ENCODE measurements at regions of chr12 and their contacts with region 1.

Region 1: DNA sequence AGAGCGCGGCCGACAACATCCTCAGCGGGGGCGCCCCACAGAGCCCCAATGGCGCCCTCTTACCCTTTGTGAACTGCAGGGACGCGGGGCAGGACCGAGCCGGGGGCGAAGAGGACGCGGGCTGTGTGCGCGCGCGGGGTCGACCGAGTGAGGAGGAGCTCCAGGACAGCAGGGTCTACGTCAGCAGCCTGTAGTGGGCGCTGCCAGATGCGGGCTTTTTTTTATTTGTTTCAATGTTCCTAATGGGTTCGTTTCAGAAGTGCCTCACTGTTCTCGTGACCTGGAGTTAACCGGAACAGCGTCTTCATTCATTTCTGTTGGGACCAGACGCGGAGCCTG is 103.8 kb upstream of the FKBP4 start:
- DNase-seq: peak in 8 of 9 donors; percentile 36 to 66 (median 56)
- ATAC-seq: peak; percentile 75
- H3K4me3 ChIP-seq: peak overlapping the region; percentile 92
- H3K4me3 Mint-ChIP-seq: peak overlapping the region; percentile 88 to 100 (median 93)
- H3K27ac ChIP-seq: peak overlapping the region; percentile 79
- H3K27ac Mint-ChIP-seq: peak overlapping the region; percentile 60 to 93 (median 86)
- H3K4me1 ChIP-seq: peaks cover 15 to 22% of the 10 kb centered on the region in 2 donors
- H3K4me1 Mint-ChIP-seq: peaks cover 36 to 57% (median 49%) of the 10 kb centered on the region in 7 donors
- H3K27me3 ChIP-seq: no peaks in the 10 kb centered on the region
- H3K27me3 Mint-ChIP-seq: peaks cover 0 to 12% (median 1%) of the 10 kb centered on the region in 5 donors

Region 2: DNA sequence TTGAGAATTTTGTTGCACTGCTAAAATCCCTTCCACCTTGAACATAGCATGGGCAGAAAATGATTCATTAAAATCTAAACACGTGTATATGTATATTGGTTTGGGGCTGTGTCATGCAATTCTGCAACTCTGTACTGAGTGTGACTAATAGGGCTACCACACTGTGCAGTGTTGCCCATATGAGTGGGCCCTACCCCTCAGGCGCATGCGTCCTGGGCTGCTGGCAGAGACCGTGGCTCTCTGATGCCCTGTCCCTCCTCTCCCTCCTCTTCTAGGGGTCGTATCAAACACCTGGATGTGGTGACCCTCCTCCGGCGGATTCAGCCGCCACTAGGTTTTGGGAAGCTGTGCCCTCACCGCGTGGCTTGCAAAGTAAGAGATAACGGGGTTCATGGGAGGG is 24.6 kb before region 1 on chr12:
- CTCF ChIA-PET with region 1: no interaction called
- POLR2A ChIA-PET with region 1: no interaction called
- intact Hi-C with region 1: no loop called
- DNase-seq: peak in 1 of 9 donors; percentile 3
- ATAC-seq: no peak
- H3K4me3 ChIP-seq: no peak overlapping the region
- H3K4me3 Mint-ChIP-seq: no peak overlapping the region
- H3K27ac ChIP-seq: no peak overlapping the region
- H3K27ac Mint-ChIP-seq: no peak overlapping the region
- H3K4me1 ChIP-seq: no peaks in the 10 kb centered on the region
- H3K4me1 Mint-ChIP-seq: peaks cover 0 to 3% (median 0%) of the 10 kb centered on the region in 7 donors
- H3K27me3 ChIP-seq: no peaks in the 10 kb centered on the region
- H3K27me3 Mint-ChIP-seq: peaks cover 0 to 2% (median 0%) of the 10 kb centered on the region in 5 donors

Region 3: GRCh38 chr12:2752676-2753371 is 61.8 kb after region 1 on chr12:
- CTCF ChIA-PET with region 1: no interaction called
- POLR2A ChIA-PET with region 1: no interaction called
- intact Hi-C with region 1: loop called (anchors 1 kb)
- DNase-seq: peak; percentile 62 to 89 (median 80)
- ATAC-seq: peak; percentile 100
- H3K4me3 ChIP-seq: no peak overlapping the region
- H3K4me3 Mint-ChIP-seq: no peak overlapping the region
- H3K27ac ChIP-seq: no peak overlapping the region
- H3K27ac Mint-ChIP-seq: peak overlapping the region in 1 of 9 donors; percentile 23
- H3K4me1 ChIP-seq: no peaks in the 10 kb centered on the region
- H3K4me1 Mint-ChIP-seq: peaks cover 0 to 8% (median 0%) of the 10 kb centered on the region in 7 donors
- H3K27me3 ChIP-seq: no peaks in the 10 kb centered on the region
- H3K27me3 Mint-ChIP-seq: peaks cover 30 to 61% (median 44%) of the 10 kb centered on the region in 5 donors

Region 4: GRCh38 chr12:2890388-2891239 is 199.6 kb after region 1 on chr12 and contains the start of gene TULP3:
- CTCF ChIA-PET with region 1: no interaction called
- POLR2A ChIA-PET with region 1: no interaction called
- intact Hi-C with region 1: loop called in 1 of 2 experiments (anchors 2 kb)
- DNase-seq: peak; percentile 95 to 98 (median 97)
- ATAC-seq: peak; percentile 99
- H3K4me3 ChIP-seq: peak within 1 kb of the TSS; percentile 96
- H3K4me3 Mint-ChIP-seq: peak within 1 kb of the TSS; percentile 93 to 100 (median 98)
- H3K27ac ChIP-seq: peak within 1 kb of the TSS; percentile 89
- H3K27ac Mint-ChIP-seq: peak within 1 kb of the TSS; percentile 81 to 97 (median 97)
- H3K4me1 ChIP-seq: peaks cover 3 to 8% of the 10 kb centered on the region in 2 donors
- H3K4me1 Mint-ChIP-seq: peaks cover 15 to 35% (median 31%) of the 10 kb centered on the region in 7 donors
- H3K27me3 ChIP-seq: no peaks in the 10 kb centered on the region
- H3K27me3 Mint-ChIP-seq: peaks cover 0 to 2% (median 0%) of the 10 kb centered on the region in 5 donors
- total RNA-seq, gene TULP3: 4.7 to 9.6 (median 7.4) TPM

Region 5: GRCh38 chr12:2940564-2940963 is 249.6 kb after region 1 on chr12:
- CTCF ChIA-PET with region 1: no interaction called
- POLR2A ChIA-PET with region 1: no interaction called
- intact Hi-C with region 1: no loop called
- DNase-seq: no peak
- ATAC-seq: no peak
- H3K4me3 ChIP-seq: no peak overlapping the region
- H3K4me3 Mint-ChIP-seq: no peak overlapping the region
- H3K27ac ChIP-seq: no peak overlapping the region
- H3K27ac Mint-ChIP-seq: peak overlapping the region in 2 of 9 donors; percentile 59 to 67
- H3K4me1 ChIP-seq: no peaks in the 10 kb centered on the region
- H3K4me1 Mint-ChIP-seq: peaks cover 0 to 5% (median 4%) of the 10 kb centered on the region in 7 donors
- H3K27me3 ChIP-seq: no peaks in the 10 kb centered on the region
- H3K27me3 Mint-ChIP-seq: no peaks in the 10 kb centered on the region

Measured in naive thymus-derived CD4-positive, alpha-beta T cell (primary cell).